Activated CD4-positive, alpha-beta T cell treated with anti-CD3 and anti-CD28 coated beads for 36 hours (primary cell): ENCODE measurements at regions of chr14 and their contacts with region 1.

Region 1: GRCh38 chr14:44952391-44953110 is 9.2 kb downstream of the KLHL28 start:
- DNase-seq: no peak
- ATAC-seq: no peak
- H3K4me3 Mint-ChIP-seq: no peak overlapping the region
- H3K27ac Mint-ChIP-seq: no peak overlapping the region
- H3K4me1 Mint-ChIP-seq: peaks cover 47% of the 10 kb centered on the region
- H3K27me3 Mint-ChIP-seq: no peaks in the 10 kb centered on the region

Region 2: DNA sequence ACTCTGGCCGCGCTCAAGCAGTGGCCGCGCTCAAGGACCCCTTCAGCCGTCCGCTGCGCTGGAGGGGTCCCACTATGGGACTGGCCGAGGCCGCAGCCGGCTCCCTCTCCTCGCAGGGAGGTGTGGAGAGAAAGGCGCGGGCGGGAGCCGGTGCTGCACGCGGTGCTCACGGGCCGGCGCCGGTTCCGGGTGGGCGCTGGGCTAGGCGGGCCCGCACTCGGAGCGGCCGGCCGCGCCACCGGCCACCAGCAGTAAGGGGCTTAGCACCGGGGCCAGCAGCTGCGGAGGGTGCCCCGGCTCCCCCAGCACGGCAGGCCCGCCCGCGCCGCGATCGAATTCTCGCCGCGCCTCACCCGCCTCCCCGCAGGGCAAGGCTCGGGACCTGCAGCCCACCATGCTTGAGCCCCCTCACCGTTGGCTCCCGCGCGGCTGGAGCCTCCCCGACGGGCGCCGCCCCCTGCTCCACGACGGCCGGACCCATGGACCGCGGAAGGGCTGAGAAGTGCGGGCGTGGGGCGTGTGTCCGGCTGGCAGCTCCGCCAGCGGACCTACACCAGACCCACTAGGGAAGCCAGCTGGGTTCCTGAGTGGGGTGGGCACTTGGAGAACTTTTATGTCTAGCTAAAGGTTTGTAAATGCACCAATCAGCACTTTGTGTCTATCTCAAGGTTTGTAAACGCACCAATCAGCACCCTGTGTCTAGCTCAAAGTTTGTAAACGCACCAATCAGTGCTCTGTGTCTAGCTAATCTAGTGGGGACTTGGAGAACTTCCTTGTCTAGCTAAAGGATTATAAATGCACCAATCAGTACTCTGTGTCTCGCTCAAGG is 40.3 kb before region 1 on chr14:
- CTCF ChIA-PET with region 1: no interaction called
- POLR2A ChIA-PET with region 1: no interaction called
- intact Hi-C with region 1: loop called in 1 of 2 experiments (anchors 2 kb)
- DNase-seq: no peak
- ATAC-seq: peak; percentile 12
- H3K4me3 Mint-ChIP-seq: no peak overlapping the region
- H3K27ac Mint-ChIP-seq: no peak overlapping the region
- H3K4me1 Mint-ChIP-seq: no peaks in the 10 kb centered on the region
- H3K27me3 Mint-ChIP-seq: peaks cover 27% of the 10 kb centered on the region

Region 3: DNA sequence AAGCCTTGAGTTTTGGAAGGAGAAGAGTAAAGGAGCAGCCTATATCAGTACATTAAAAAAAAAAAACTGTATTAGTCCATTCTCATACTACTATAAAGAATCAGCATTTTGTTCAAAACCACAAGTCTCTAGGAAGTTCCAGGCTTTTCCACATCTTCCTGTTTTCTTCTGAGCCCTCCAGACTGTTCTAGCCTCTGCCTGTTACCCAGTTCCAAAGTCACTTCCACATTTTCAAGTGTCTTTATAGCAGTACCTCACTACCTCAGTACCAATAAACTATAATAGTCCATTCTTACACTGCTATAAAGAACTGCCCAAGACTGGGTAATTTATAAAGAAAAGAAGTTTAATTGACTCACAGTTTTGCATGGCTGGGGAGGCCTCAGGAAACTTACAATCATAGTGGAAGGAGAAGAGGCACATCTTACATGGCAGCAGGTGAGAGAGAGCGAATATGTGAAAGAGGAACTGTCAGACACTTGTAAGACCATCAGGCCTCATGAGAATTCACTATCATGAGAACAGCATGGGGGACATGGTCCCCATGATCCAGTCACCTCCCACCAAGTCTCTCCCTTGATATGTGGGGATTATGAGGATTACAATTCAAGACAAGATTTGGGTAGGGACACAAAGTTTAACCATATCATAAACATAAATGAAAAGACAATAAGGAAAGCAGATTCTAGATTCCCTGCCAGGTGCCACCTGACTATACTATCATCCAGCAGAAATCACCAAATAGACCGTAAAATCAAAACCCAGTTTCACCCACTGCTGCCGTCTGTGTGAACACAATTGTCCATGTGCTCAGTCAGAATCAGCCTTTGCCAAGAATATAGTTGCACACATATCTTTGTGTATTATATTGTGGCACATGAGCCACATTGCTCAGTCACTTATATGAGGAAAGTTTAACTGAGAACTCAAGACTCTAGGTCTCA is 37.2 kb after region 1 on chr14:
- CTCF ChIA-PET with region 1: no interaction called
- POLR2A ChIA-PET with region 1: no interaction called
- intact Hi-C with region 1: no loop called
- DNase-seq: no peak
- ATAC-seq: no peak
- H3K4me3 Mint-ChIP-seq: no peak overlapping the region
- H3K27ac Mint-ChIP-seq: no peak overlapping the region
- H3K4me1 Mint-ChIP-seq: peaks cover 7% of the 10 kb centered on the region
- H3K27me3 Mint-ChIP-seq: no peaks in the 10 kb centered on the region